ENCODE measurements at regions of chr10 and their contacts with region 1.

Region 1: GRCh38 chr10:52659085-52659484 is 113.5 kb downstream of the MBL2 start:
- DNase-seq: no peak
- ATAC-seq: no peak
- H3K4me3 ChIP-seq: no peak overlapping the region
- H3K27ac ChIP-seq: no peak overlapping the region
- H3K4me1 ChIP-seq: no peaks in the 10 kb centered on the region
- H3K27me3 ChIP-seq: no peaks in the 10 kb centered on the region
- CTCF ChIP-seq: no peak
- EP300 ChIP-seq: no peak
- POLR2A ChIP-seq: no peak
- RAD21 ChIP-seq: no peak

Region 2: GRCh38 chr10:52376694-52377354 is 282.3 kb before region 1 on chr10:
- CTCF ChIA-PET with region 1: no interaction called
- POLR2A ChIA-PET with region 1: no interaction called
- RAD21 ChIA-PET with region 1: no interaction called
- SMC1A ChIA-PET with region 1: no interaction called
- in situ Hi-C with region 1: no loop called
- intact Hi-C with region 1: no loop called
- DNase-seq: no peak
- ATAC-seq: no peak
- H3K4me3 ChIP-seq: no peak overlapping the region
- H3K27ac ChIP-seq: no peak overlapping the region
- H3K4me1 ChIP-seq: no peaks in the 10 kb centered on the region
- H3K27me3 ChIP-seq: no peaks in the 10 kb centered on the region; a peak in 1 of 4 replicates
- CTCF ChIP-seq: no peak
- EP300 ChIP-seq: no peak
- POLR2A ChIP-seq: no peak
- RAD21 ChIP-seq: no peak

Region 3: GRCh38 chr10:52720018-52720417 is 60.9 kb after region 1 on chr10:
- CTCF ChIA-PET with region 1: no interaction called
- POLR2A ChIA-PET with region 1: no interaction called
- RAD21 ChIA-PET with region 1: no interaction called
- SMC1A ChIA-PET with region 1: no interaction called
- in situ Hi-C with region 1: loop called (anchors 5 kb)
- intact Hi-C with region 1: no loop called
- DNase-seq: no peak
- ATAC-seq: no peak
- H3K4me3 ChIP-seq: no peak overlapping the region
- H3K27ac ChIP-seq: no peak overlapping the region
- H3K4me1 ChIP-seq: no peaks in the 10 kb centered on the region
- H3K27me3 ChIP-seq: no peaks in the 10 kb centered on the region
- CTCF ChIP-seq: no peak
- EP300 ChIP-seq: no peak
- POLR2A ChIP-seq: no peak
- RAD21 ChIP-seq: no peak